ENCODE measurements at regions of chr5 and their contacts with region 1.

Region 1: GRCh38 chr5:148482691-148483462 is 99.1 kb downstream of the FBXO38 start:
- DNase-seq: peak; percentile 8 to 62 (median 41)
- ATAC-seq: peak; percentile 80
- H3K4me3 ChIP-seq: no peak overlapping the region
- H3K4me3 Mint-ChIP-seq: peak overlapping the region in 6 of 10 donors; percentile 2 to 55 (median 30)
- H3K27ac ChIP-seq: no peak overlapping the region
- H3K27ac Mint-ChIP-seq: peak overlapping the region in 1 of 9 donors; percentile 57
- H3K4me1 ChIP-seq: no peaks in the 10 kb centered on the region
- H3K4me1 Mint-ChIP-seq: peaks cover 0 to 10% (median 6%) of the 10 kb centered on the region in 7 donors
- H3K27me3 ChIP-seq: no peaks in the 10 kb centered on the region
- H3K27me3 Mint-ChIP-seq: peaks cover 30 to 56% (median 50%) of the 10 kb centered on the region in 5 donors

Region 2: GRCh38 chr5:148290271-148291195 is 192.3 kb before region 1 on chr5:
- CTCF ChIA-PET with region 1: no interaction called
- POLR2A ChIA-PET with region 1: no interaction called
- intact Hi-C with region 1: loop called (anchors 1 to 5 kb)
- DNase-seq: peak in 2 of 9 donors; percentile 3 to 14
- ATAC-seq: peak; percentile 26
- H3K4me3 ChIP-seq: no peak overlapping the region
- H3K4me3 Mint-ChIP-seq: no peak overlapping the region
- H3K27ac ChIP-seq: no peak overlapping the region
- H3K27ac Mint-ChIP-seq: no peak overlapping the region
- H3K4me1 ChIP-seq: no peaks in the 10 kb centered on the region
- H3K4me1 Mint-ChIP-seq: no peaks in the 10 kb centered on the region
- H3K27me3 ChIP-seq: no peaks in the 10 kb centered on the region
- H3K27me3 Mint-ChIP-seq: peaks cover 0 to 2% (median 0%) of the 10 kb centered on the region in 5 donors

Measured in naive thymus-derived CD4-positive, alpha-beta T cell (primary cell).